ENCODE measurements at regions of chr3 and their contacts with region 1.

Region 1: GRCh38 chr3:128879125-128879969 is at the start of gene ACAD9:
- DNase-seq: peak; percentile 100
- H3K4me3 Mint-ChIP-seq: peak within 1 kb of the TSS; percentile 88
- H3K27ac Mint-ChIP-seq: peak within 1 kb of the TSS; percentile 94
- H3K4me1 Mint-ChIP-seq: peaks cover 59% of the 10 kb centered on the region
- H3K27me3 Mint-ChIP-seq: peaks cover 3% of the 10 kb centered on the region
- total RNA-seq, gene ACAD9: 68.5 and 69.2 TPM in 2 replicates

Region 2: DNA sequence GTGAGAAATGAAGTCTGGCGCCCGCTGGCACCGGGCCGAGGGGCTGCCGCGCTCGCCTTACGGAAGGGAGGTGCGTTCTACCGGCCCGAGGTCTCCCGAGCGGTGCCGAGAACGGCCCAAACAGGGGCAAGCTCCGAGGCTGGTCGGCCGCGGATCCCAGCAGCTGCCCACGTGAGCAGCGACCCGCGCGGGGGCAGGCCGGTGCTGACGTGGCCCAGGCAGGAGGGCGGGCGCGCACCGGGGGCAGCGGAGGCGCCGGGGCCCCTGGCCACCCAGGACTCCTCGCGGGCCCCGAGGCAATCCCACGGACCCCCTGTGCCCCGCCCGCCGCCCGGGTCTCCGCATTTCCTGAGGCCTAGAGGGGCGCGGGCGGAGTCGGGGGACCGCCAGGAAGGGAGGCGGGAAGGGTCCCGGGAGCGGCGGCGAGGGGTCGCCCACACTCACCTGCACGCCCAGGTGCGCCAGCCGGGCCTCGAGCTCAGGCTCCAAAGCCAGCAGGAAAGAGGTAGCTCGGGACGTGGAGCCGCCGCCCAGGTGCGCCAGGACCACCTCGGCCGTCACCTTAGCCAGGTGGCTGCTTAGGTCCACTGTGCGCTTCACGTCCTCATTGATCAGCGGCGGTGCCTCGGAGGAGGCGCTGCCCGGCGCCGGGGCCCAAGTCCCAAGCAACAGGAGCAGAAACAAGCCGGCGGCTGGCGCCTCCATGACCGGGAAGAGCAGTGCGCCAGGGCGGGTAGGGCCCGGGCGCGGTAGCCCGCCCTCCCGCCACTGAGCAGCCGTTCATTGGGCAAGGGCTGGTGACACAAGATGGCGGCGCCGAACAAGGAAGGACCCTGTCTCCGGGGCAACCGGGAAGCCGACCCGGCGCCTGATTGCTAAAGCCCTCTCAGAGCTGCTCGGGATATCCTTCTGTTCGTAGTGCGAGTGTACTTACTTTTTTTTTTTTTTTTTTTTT is 229.0 kb before region 1 on chr3 and contains the start of gene RPN1:
- intact Hi-C with region 1: loop called (anchors 1 kb)
- DNase-seq: peak; percentile 98
- H3K4me3 Mint-ChIP-seq: peak within 1 kb of the TSS; percentile 88
- H3K27ac Mint-ChIP-seq: peak within 1 kb of the TSS; percentile 92
- H3K4me1 Mint-ChIP-seq: peaks cover 32% of the 10 kb centered on the region
- H3K27me3 Mint-ChIP-seq: no peaks in the 10 kb centered on the region
- total RNA-seq, gene RPN1: 192 and 194 TPM in 2 replicates

Region 3: GRCh38 chr3:128689060-128689459 is 190.3 kb before region 1 on chr3:
- intact Hi-C with region 1: no loop called
- DNase-seq: no peak
- H3K4me3 Mint-ChIP-seq: no peak overlapping the region
- H3K27ac Mint-ChIP-seq: no peak overlapping the region
- H3K4me1 Mint-ChIP-seq: peaks cover 4% of the 10 kb centered on the region
- H3K27me3 Mint-ChIP-seq: no peaks in the 10 kb centered on the region

Region 4: DNA sequence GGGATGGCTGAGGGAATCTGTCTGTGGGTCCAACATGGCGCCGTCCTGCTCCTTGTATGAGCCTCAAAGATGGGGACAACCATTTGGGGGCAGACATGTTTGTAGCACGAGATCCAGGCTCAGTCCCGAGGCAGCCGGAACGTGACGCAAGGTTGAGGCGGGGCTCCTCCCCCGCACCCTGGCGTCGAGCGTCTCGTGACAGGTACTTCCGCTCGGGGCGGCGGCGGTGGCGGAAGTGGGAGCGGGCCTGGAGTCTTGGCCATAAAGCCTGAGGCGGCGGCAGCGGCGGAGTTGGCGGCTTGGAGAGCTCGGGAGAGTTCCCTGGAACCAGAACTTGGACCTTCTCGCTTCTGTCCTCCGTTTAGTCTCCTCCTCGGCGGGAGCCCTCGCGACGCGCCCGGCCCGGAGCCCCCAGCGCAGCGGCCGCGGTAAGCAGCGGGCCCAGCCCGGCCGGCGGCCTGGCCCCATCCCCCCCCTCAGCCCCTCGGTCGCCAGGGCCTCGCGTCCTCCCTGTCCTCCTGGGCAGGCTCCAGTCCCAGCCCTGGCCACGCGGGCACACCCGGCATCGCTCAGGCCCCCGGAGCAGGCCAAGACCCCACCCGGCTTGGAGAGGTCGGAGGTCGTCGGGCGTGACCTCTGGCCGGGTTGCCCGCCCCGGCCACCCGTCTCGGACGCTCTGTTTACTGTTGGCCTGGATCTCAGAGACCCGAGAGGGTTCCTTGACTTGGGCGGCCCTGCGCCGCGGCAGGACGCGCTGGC is 153.2 kb before region 1 on chr3 and contains the start of gene RAB7A:
- intact Hi-C with region 1: loop called (anchors 1 kb)
- DNase-seq: peak; percentile 99
- H3K4me3 Mint-ChIP-seq: peak within 1 kb of the TSS; percentile 92
- H3K27ac Mint-ChIP-seq: peak within 1 kb of the TSS; percentile 94
- H3K4me1 Mint-ChIP-seq: peaks cover 42% of the 10 kb centered on the region
- H3K27me3 Mint-ChIP-seq: peaks cover 4% of the 10 kb centered on the region
- total RNA-seq, gene RAB7A: 338 and 361 TPM in 2 replicates

Region 5: DNA sequence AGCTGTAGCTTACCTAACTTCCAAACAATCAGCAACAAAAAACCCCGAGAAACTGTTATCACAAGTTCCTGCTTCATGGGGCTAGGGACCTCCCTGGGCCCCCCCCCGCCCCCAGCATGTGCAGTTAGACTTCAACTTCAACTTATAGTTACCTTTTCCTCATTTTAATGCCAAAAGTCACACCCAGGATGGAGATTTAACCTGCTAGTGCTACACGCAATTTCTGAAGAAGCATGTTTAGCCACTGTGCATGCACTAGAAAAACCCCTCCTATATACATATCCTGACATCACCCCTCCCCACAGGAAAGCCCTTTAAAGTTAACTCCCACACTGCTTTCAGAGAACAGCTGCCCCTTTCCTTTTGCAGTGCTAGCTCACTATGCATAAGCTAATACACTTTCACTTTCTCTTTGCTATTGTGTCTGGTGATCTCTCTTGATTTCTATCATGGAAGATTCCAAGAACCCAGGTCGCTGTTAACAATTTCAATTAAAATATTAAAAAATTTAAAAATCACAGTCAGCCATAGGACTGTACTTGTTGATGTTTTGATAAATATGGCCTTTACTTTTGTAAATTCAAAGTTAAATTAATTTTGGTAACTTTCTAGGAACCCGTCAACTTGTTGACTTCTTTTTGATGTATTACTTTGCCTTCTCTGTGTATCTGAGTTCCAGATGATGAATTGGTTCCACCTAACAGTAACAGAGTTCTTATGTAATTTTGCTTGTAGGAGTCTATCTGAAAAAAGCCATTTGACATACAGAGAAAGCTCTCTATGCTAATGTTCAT is 75.1 kb before region 1 on chr3:
- intact Hi-C with region 1: loop called (anchors 1 kb)
- DNase-seq: peak; percentile 93
- H3K4me3 Mint-ChIP-seq: peak overlapping the region; percentile 70
- H3K27ac Mint-ChIP-seq: peak overlapping the region; percentile 98
- H3K4me1 Mint-ChIP-seq: peaks cover 78% of the 10 kb centered on the region
- H3K27me3 Mint-ChIP-seq: no peaks in the 10 kb centered on the region

Region 6: GRCh38 chr3:128922804-128923459 is 43.6 kb after region 1 on chr3:
- intact Hi-C with region 1: loop called (anchors 2 kb)
- DNase-seq: peak; percentile 85
- H3K4me3 Mint-ChIP-seq: peak overlapping the region; percentile 74
- H3K27ac Mint-ChIP-seq: peak overlapping the region; percentile 79
- H3K4me1 Mint-ChIP-seq: peaks cover 25% of the 10 kb centered on the region
- H3K27me3 Mint-ChIP-seq: no peaks in the 10 kb centered on the region

Region 7: DNA sequence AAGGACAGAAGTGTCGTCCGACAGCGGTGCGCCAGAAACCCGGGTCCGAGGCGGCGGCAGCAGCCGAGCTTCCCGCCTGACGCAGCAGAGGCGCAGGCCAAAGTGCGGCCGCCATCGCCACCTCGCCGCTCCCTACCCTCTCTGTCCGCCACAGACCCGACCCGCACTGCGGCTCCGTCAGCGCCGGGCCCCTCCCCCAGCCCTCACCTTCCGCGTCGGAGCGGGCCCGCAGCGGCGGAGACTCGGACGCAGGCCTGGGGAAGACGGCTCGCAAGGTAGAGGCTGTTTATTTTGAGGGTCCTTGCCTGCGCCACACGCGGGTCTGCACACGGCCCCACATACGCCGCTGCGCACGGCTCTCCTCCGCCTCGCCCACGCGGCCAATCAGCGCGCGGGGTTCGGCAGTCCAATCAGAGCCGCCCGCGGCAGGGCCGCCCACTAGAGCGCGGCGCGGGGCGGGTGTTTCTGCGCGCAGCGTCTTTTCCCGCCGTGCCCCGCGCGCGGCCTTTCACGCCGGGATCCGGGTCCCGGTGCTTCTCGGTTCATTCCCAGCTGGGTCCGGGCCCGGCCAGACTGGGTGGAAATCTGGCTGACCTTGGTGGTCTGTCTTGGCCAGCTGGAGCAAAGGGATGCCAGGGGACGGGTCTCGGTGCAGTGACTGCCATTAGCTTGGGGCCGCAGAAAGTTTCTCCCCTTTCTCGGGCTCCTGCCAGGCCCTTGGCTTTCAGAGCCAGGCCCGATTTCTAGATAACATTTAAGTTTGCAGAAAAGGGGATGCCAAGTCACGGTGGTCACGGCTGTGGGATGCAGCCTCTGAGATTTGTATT is 304.4 kb after region 1 on chr3 and contains the start of gene CNBP:
- intact Hi-C with region 1: loop called (anchors 5 kb)
- DNase-seq: peak; percentile 98
- H3K4me3 Mint-ChIP-seq: peak within 1 kb of the TSS; percentile 96
- H3K27ac Mint-ChIP-seq: peak within 1 kb of the TSS; percentile 99
- H3K4me1 Mint-ChIP-seq: peaks cover 33% of the 10 kb centered on the region
- H3K27me3 Mint-ChIP-seq: no peaks in the 10 kb centered on the region
- total RNA-seq, gene CNBP: 422 and 430 TPM in 2 replicates

Region 8: GRCh38 chr3:129278439-129278970 is 399.2 kb after region 1 on chr3 and contains the start of gene HMCES:
- intact Hi-C with region 1: loop called (anchors 10 kb)
- DNase-seq: peak; percentile 99
- H3K4me3 Mint-ChIP-seq: peak within 1 kb of the TSS; percentile 99
- H3K27ac Mint-ChIP-seq: peak within 1 kb of the TSS; percentile 96
- H3K4me1 Mint-ChIP-seq: peaks cover 43% of the 10 kb centered on the region
- H3K27me3 Mint-ChIP-seq: no peaks in the 10 kb centered on the region
- total RNA-seq, gene HMCES: 58.3 and 62.6 TPM in 2 replicates